ENCODE measurements at regions of chr12 and their contacts with region 1.

Region 1: DNA sequence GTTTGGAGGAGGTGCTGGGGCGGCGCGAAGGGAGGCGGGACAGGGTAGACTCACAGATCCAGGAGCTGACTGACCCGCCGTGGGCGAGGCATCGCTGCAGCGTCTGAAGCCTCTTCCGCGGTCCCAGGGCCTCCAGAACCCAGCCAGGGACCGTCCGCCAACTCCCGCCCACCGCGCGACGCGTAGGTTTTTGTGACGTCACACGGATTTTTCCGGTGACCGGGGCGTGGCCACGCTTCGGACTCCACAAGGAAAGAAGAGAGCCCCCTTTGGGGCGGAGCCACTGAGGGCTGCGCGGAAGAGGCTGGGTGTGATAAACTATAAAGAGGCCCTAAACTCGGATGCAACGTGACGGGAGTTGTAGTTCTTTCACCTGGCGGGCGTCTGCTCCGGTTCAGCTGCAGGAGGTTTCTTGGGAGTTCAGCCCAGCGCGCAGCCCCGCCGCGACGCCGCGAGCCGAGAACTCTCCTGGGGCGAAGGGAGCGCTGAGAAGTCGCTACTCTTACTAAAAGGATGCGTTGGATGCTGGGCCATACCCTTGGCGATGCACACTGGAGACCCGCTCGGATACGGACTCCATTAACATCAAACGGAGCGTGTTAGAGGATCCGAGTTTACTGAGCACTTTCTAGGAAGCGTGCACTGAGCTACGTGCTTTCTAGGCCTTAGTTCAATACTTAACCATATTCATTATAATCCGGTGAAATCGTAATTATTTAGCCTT is at the start of gene AMN1:
- DNase-seq: peak; percentile 96
- ATAC-seq: peak; percentile 85
- H3K4me3 ChIP-seq: peak within 1 kb of the TSS; percentile 76 to 80
- H3K27ac ChIP-seq: peak within 1 kb of the TSS; percentile 83
- H3K4me1 ChIP-seq: peaks cover 40 to 71% of the 10 kb centered on the region in 2 experiments
- H3K27me3 ChIP-seq: no peaks in the 10 kb centered on the region
- CTCF ChIP-seq: no peak
- POLR2A ChIP-seq: no peak
- RAD21 ChIP-seq: no peak
- total RNA-seq, gene AMN1: 26.9 TPM

Region 2: DNA sequence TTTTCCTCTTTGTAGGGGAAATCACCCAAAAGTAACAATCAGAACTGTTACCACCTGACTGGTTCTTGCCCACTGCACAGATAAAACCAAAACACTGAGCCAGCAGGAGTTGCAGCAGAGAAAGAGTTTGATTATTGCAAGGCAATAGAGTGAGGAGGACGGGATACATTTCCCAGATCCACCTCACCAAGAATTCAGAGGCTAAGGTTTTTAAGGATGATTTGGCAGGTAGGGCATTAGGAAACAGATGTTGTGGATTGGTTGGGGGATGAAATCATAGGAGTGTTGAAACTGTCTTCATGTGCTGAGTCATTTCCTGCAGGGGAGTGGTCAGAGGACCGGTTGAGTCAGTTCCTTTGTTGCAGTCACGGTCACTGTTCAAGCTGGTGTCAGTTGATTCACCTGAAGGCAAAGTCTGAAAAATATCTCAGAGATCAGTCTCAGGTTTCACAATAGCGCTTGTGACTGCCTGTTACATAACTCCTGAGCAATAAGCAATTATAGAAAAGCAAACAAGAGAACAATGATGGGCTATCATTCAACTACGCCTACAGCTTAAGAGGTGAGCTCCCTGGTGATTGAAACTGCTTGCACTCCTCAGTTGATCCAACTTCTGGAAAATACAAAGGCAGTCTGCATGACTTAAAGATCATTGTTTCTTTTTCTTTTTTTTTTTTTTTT is 20.1 kb after region 1 on chr12:
- CTCF ChIA-PET with region 1: interaction called, 3 read pairs
- POLR2A ChIA-PET with region 1: interaction called, 54 read pairs
- RAD21 ChIA-PET with region 1: interaction called in 1 of 2 experiments, 7 read pairs
- intact Hi-C with region 1: loop called (anchors 1 kb)
- DNase-seq: peak; percentile 99
- ATAC-seq: peak; percentile 87
- H3K4me3 ChIP-seq: peak overlapping the region; percentile 10 to 47; a peak in 3 of 4 replicates
- H3K27ac ChIP-seq: peak overlapping the region; percentile 92
- H3K4me1 ChIP-seq: peaks cover 79 to 83% of the 10 kb centered on the region in 2 experiments
- H3K27me3 ChIP-seq: no peaks in the 10 kb centered on the region
- CTCF ChIP-seq: no peak
- POLR2A ChIP-seq: no peak
- RAD21 ChIP-seq: peak; percentile 58

Region 3: DNA sequence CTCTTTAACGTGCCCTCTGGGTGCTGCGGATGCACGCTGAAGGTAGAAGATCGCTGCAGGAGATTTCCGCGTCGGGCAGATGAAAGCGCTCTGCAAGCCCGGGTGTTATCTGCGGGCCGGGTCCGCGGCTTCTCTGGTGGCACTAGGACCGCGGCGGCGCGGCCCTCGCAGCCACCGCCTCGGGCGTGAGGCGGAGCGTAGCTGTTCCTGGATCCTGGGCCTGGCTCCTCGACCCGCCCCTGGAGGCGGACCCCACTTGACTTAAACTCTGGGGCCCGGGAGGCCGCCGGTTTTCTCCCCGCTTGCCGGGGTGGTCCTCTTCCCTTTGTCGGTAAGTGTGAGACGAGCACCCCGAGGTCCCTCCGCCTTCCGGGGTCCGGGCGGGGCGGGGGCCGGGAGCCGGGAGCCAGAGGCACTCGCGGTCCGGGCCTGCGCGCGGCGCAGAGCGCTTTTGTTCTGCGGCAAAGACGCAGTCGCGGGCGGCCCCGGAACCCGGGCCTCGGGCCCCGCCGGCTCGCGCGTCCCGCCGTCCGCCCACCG is 230.2 kb after region 1 on chr12 and contains the start of gene RESF1:
- CTCF ChIA-PET with region 1: no interaction called
- POLR2A ChIA-PET with region 1: no interaction called
- RAD21 ChIA-PET with region 1: no interaction called
- intact Hi-C with region 1: loop called (anchors 5 kb)
- DNase-seq: peak; percentile 83
- ATAC-seq: peak; percentile 96
- H3K4me3 ChIP-seq: peak within 1 kb of the TSS; percentile 68 to 87
- H3K27ac ChIP-seq: peak within 1 kb of the TSS; percentile 86
- H3K4me1 ChIP-seq: peaks cover 24 to 41% of the 10 kb centered on the region in 2 experiments
- H3K27me3 ChIP-seq: no peaks in the 10 kb centered on the region
- CTCF ChIP-seq: no peak
- POLR2A ChIP-seq: peak; percentile 45
- RAD21 ChIP-seq: peak; percentile 27
- total RNA-seq, gene RESF1: 64.7 TPM

Region 4: DNA sequence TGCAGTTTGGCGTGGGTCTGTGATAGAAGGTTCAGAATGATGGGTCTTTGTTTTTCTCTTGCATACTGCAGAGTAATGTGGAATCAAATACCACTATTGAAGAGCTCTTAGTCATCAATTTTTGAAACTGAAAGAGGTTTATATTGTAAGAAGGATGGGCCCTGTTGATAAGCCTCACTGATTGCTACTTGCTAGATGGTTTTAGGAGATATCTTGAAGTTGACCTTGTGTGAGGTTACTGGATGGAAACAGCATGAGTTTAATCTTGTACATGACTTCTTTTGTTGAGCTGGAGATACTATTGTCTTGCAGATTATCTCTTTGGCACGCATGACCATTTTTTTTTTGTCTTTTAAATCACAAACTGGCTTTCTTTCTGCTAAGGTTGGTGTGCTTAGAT is 391.3 kb after region 1 on chr12:
- CTCF ChIA-PET with region 1: no interaction called
- POLR2A ChIA-PET with region 1: no interaction called
- RAD21 ChIA-PET with region 1: no interaction called
- intact Hi-C with region 1: no loop called
- DNase-seq: no peak
- ATAC-seq: no peak
- H3K4me3 ChIP-seq: no peak overlapping the region
- H3K27ac ChIP-seq: no peak overlapping the region
- H3K4me1 ChIP-seq: peaks cover 21 to 24% of the 10 kb centered on the region in 2 experiments
- H3K27me3 ChIP-seq: no peaks in the 10 kb centered on the region
- CTCF ChIP-seq: no peak
- POLR2A ChIP-seq: no peak
- RAD21 ChIP-seq: no peak

Region 5: GRCh38 chr12:32419520-32419960 is 690.5 kb after region 1 on chr12:
- CTCF ChIA-PET with region 1: no interaction called
- POLR2A ChIA-PET with region 1: interaction called, 10 read pairs
- RAD21 ChIA-PET with region 1: no interaction called
- intact Hi-C with region 1: no loop called
- DNase-seq: no peak
- ATAC-seq: peak; percentile 38
- H3K4me3 ChIP-seq: no peak overlapping the region
- H3K27ac ChIP-seq: no peak overlapping the region
- H3K4me1 ChIP-seq: peaks cover 11 to 19% of the 10 kb centered on the region in 2 experiments
- H3K27me3 ChIP-seq: no peaks in the 10 kb centered on the region
- CTCF ChIP-seq: no peak
- POLR2A ChIP-seq: no peak
- RAD21 ChIP-seq: no peak

Measured in HCT116 (cell line).